MCF 10A (cell line): ENCODE measurements at regions of chr3 and their contacts with region 1.

Region 1: GRCh38 chr3:111577794-111578685 is 17.1 kb downstream of the ZBED2 start:
- DNase-seq: peak; percentile 81
- H3K4me3 Mint-ChIP-seq: no peak overlapping the region
- H3K27ac Mint-ChIP-seq: no peak overlapping the region
- H3K4me1 Mint-ChIP-seq: peaks cover 31% of the 10 kb centered on the region
- H3K27me3 Mint-ChIP-seq: no peaks in the 10 kb centered on the region
- CTCF ChIP-seq: peak; percentile 82

Region 2: GRCh38 chr3:111080413-111080812 is 497.6 kb before region 1 on chr3:
- CTCF ChIA-PET with region 1: no interaction called
- POLR2A ChIA-PET with region 1: no interaction called
- intact Hi-C with region 1: no loop called
- DNase-seq: peak; percentile 61
- H3K4me3 Mint-ChIP-seq: no peak overlapping the region
- H3K27ac Mint-ChIP-seq: no peak overlapping the region
- H3K4me1 Mint-ChIP-seq: peaks cover 5% of the 10 kb centered on the region
- H3K27me3 Mint-ChIP-seq: no peaks in the 10 kb centered on the region
- CTCF ChIP-seq: peak; percentile 65

Region 3: GRCh38 chr3:111594205-111594604 is 16.2 kb after region 1 on chr3:
- CTCF ChIA-PET with region 1: interaction called, 36 read pairs
- POLR2A ChIA-PET with region 1: interaction called, 16 read pairs
- intact Hi-C with region 1: no loop called
- DNase-seq: peak; percentile 75
- H3K4me3 Mint-ChIP-seq: peak overlapping the region; percentile 64
- H3K27ac Mint-ChIP-seq: peak overlapping the region; percentile 82
- H3K4me1 Mint-ChIP-seq: peaks cover 70% of the 10 kb centered on the region
- H3K27me3 Mint-ChIP-seq: no peaks in the 10 kb centered on the region
- CTCF ChIP-seq: no peak

Region 4: DNA sequence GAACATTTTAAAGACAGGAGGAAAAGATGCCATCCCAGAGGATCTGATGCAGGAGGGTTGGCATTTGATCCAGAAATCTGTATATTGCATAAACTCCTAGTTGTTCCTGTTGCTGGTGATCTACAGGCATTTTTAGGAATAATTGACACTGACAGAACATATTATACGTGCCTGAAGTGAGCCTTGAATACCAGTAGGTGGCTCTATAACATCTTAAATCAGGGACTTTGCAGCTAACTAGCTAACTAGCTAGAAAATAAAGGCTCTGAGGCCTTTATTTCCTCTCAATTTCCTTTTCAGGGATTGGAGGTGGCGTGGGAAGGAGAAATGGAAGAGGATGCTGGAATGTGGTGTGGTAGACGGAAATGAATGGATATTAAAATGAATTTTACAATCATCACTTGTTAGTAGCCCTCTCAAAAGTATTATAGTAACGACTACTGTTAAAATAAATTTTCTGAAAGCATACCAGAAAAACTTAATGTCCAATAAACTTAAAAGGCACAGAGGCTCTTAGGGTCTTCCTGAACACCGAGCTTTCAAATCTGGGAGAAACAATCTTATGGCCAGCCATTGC is 91.0 kb after region 1 on chr3:
- CTCF ChIA-PET with region 1: interaction called, 6 read pairs
- POLR2A ChIA-PET with region 1: interaction called, 6 read pairs
- intact Hi-C with region 1: loop called (anchors 1 kb)
- DNase-seq: peak; percentile 61
- H3K4me3 Mint-ChIP-seq: no peak overlapping the region
- H3K27ac Mint-ChIP-seq: peak overlapping the region; percentile 10
- H3K4me1 Mint-ChIP-seq: peaks cover 33% of the 10 kb centered on the region
- H3K27me3 Mint-ChIP-seq: no peaks in the 10 kb centered on the region
- CTCF ChIP-seq: peak; percentile 71

Region 5: GRCh38 chr3:111691293-111691909 is 113.4 kb after region 1 on chr3:
- CTCF ChIA-PET with region 1: interaction called, 193 read pairs
- POLR2A ChIA-PET with region 1: interaction called, 11 read pairs
- intact Hi-C with region 1: loop called (anchors 1 kb)
- DNase-seq: peak; percentile 51
- H3K4me3 Mint-ChIP-seq: no peak overlapping the region
- H3K27ac Mint-ChIP-seq: no peak overlapping the region
- H3K4me1 Mint-ChIP-seq: peaks cover 6% of the 10 kb centered on the region
- H3K27me3 Mint-ChIP-seq: no peaks in the 10 kb centered on the region
- CTCF ChIP-seq: peak; percentile 55

Region 6: GRCh38 chr3:111967651-111968274 is 389.7 kb after region 1 on chr3:
- CTCF ChIA-PET with region 1: interaction called, 18 read pairs
- POLR2A ChIA-PET with region 1: no interaction called
- intact Hi-C with region 1: loop called (anchors 5 kb)
- DNase-seq: peak; percentile 86
- H3K4me3 Mint-ChIP-seq: no peak overlapping the region
- H3K27ac Mint-ChIP-seq: peak overlapping the region; percentile 5
- H3K4me1 Mint-ChIP-seq: peaks cover 11% of the 10 kb centered on the region
- H3K27me3 Mint-ChIP-seq: no peaks in the 10 kb centered on the region
- CTCF ChIP-seq: peak; percentile 86